ENCODE measurements at regions of chr17 and their contacts with region 1.

Region 1: DNA sequence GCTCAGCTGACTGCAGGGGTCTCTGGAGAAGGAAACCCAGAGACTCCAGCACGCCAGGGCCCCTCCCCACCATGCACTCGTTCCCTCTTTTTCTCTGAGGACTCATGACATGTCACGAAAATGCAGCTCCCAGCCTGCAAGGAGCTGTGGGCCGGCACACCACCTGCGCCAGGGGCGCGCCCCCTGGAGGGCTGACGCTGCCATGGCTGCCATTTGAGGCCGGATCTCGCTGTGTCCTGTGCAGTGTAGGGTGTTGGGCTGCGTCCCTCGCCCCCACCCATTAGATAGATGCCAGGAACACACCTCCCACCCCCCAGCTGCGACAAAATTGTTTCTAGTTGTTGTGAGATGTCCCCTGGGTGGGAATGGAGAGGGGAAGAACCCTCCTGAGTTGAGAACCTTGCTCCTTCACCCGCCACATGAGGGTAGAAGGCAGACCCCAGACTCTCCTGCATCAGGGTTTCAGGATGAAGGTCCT is 8.2 kb downstream of the SYNGR2 start:
- DNase-seq: peak; percentile 72
- H3K4me3 Mint-ChIP-seq: no peak overlapping the region
- H3K27ac Mint-ChIP-seq: no peak overlapping the region
- H3K4me1 Mint-ChIP-seq: peaks cover 38% of the 10 kb centered on the region
- H3K27me3 Mint-ChIP-seq: no peaks in the 10 kb centered on the region

Region 2: DNA sequence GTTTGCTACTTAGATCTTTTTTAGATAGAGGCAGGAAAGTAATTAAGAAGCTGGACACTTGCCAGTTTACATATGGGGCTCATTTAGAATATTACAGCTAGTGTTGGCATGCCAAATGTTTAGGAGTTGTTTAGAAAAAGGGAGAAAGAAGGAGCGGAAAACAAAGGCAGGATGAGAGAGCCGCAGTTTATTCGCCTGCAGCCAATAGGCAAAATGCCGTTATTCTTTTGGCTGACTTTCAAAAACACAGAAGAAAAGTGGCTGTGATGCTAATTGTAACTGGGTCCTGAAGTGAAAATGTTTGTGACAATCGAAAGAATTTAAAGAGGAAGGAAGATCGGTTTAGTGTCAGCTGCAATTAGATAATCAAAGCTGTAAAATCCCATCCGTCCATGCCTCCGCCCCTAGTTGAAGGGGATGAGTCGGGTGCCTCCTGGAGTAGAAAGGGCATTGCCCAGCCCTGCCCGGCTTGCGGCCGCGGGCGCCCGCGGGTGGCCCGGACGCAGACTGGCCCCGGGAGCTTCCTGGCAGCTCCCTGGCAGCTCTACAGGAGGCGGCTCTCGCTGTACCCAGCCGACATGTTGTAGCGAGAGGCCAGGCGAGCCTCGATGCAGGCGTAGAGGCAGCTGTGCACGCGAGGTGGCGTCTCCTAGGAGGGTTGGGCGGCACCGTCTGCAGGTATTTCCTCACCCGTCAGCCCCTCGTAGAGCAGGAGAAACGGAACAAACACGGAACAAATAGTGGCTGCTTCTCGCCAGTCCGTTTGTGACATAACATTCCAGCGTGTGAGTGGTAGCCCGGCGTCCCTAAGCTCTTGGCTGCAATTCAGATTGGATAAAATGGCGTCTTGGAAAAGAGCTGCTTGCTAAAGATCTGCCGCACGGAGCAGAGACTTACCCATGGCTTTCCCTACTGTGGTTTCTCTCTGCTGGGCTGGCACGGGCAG is 135.9 kb before region 1 on chr17:
- intact Hi-C with region 1: no loop called
- DNase-seq: no peak
- H3K4me3 Mint-ChIP-seq: peak overlapping the region; percentile 58
- H3K27ac Mint-ChIP-seq: no peak overlapping the region
- H3K4me1 Mint-ChIP-seq: peaks cover 4% of the 10 kb centered on the region
- H3K27me3 Mint-ChIP-seq: no peaks in the 10 kb centered on the region

Region 3: GRCh38 chr17:78082988-78083387 is 93.6 kb before region 1 on chr17:
- intact Hi-C with region 1: loop called (anchors 2 kb)
- DNase-seq: no peak
- H3K4me3 Mint-ChIP-seq: no peak overlapping the region
- H3K27ac Mint-ChIP-seq: no peak overlapping the region
- H3K4me1 Mint-ChIP-seq: peaks cover 15% of the 10 kb centered on the region
- H3K27me3 Mint-ChIP-seq: no peaks in the 10 kb centered on the region

Region 4: GRCh38 chr17:78133971-78134898 is 42.4 kb before region 1 on chr17:
- intact Hi-C with region 1: loop called (anchors 5 kb)
- DNase-seq: peak; percentile 80
- H3K4me3 Mint-ChIP-seq: peak overlapping the region; percentile 75
- H3K27ac Mint-ChIP-seq: peak overlapping the region; percentile 54
- H3K4me1 Mint-ChIP-seq: peaks cover 57% of the 10 kb centered on the region
- H3K27me3 Mint-ChIP-seq: no peaks in the 10 kb centered on the region

Measured in activated T-helper 2 cell treated with anti-CD3 and anti-CD28 coated beads, Interferon-gamma antibody, Interleukin-2, Interleukin-4, amounts not matched to agents 10 μg/mL and 5 μg/mL and 100 μg/mL, durations not matched to agents 14 hours and 24 hours and 36 hours (primary cell).